K562 (cell line): ENCODE measurements at regions of chr10 and their contacts with region 1.

Region 1: DNA sequence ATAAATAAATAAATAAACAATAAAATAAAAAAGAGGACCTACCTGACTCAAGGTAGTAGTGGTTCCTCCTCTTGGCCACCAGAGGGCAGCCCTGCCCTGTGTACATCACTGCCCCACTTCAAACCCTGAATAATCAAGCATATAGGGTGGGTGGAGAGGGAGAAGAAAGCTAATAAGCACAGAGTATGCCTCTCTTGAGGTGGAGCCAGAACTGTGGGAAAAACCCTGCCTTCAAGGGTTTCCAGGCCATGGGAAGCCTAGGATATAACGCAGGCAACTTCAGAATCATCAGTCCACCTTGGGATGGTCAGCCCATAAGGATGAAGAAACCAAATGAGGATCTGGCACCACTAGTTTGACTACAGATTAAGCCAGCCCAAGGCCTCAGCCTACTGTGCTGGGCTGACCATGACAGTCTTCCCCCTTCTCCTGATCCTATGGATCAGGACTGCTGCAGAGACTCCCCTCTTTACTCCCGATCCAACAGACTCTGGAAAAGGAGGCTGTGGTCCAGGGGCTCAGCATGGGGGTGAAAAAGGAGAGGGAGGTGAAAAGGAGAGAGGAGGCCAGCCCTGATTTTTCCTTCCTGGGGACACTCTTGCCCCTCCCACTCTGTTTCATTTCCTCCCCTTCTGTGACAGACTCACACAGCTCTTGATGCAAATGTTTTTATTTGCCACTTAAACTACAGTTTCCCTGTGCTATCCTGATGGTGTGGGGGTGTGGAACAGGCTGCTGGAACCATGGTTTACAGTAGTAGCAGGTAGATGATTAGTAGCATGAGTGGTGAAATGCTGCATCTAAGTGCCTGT is 10.1 kb downstream of the AVPI1 start:
- DNase-seq: peak; percentile 55 to 69 (median 60)
- ATAC-seq: peak; percentile 89
- H3K4me3 ChIP-seq: no peak overlapping the region
- H3K27ac ChIP-seq: no peak overlapping the region
- H3K4me1 ChIP-seq: peaks cover 2 to 9% of the 10 kb centered on the region in 2 experiments; a peak in 3 of 5 replicates
- H3K27me3 ChIP-seq: no peaks in the 10 kb centered on the region
- CTCF ChIP-seq: peak; percentile 70 to 77 (median 70)
- EP300 ChIP-seq: no peak
- POLR2A ChIP-seq: peak; percentile 56
- RAD21 ChIP-seq: peak; percentile 65 to 70

Region 2: GRCh38 chr10:97701438-97702069 is 24.6 kb after region 1 on chr10:
- CTCF ChIA-PET with region 1: no interaction called
- POLR2A ChIA-PET with region 1: no interaction called
- in situ Hi-C with region 1: no loop called
- intact Hi-C with region 1: loop called (anchors 2 kb)
- DNase-seq: peak; percentile 55 to 73 (median 64)
- ATAC-seq: peak; percentile 98
- H3K4me3 ChIP-seq: no peak overlapping the region
- H3K27ac ChIP-seq: no peak overlapping the region
- H3K4me1 ChIP-seq: peaks cover 0 to 3% of the 10 kb centered on the region in 2 experiments; a peak in 4 of 5 replicates
- H3K27me3 ChIP-seq: no peaks in the 10 kb centered on the region
- CTCF ChIP-seq: peak; percentile 74 to 90 (median 87)
- EP300 ChIP-seq: no peak
- POLR2A ChIP-seq: no peak
- RAD21 ChIP-seq: peak; percentile 62 to 79